WTC11 (cell line): ENCODE measurements at regions of chr11 and their contacts with region 1.

Region 1: DNA sequence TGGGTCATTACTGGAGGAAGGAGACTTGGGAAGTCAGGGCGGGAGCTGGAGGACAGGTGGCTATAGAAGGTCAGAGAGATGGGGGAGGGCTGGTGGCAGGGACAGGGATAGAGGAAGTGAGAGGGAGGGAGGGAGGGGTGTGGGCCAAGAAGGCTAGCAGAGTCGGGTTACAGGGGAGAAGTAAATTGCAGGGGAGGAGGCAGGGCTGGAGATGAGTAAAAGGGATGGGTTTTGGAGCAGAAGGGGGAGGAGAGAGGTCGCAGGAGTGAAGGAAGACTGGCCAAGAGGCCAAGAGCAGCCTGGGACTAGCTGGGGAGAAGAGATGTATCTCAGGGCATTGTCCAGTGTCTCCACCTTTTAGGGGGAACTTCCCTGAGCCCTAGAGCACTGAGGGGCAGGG is 33.0 kb downstream of the LRRC10B start:
- DNase-seq: peak; percentile 54
- ATAC-seq: peak; percentile 85
- H3K4me3 Mint-ChIP-seq: peak overlapping the region; percentile 22; the same call in 1 of the 2 replicates
- H3K27ac Mint-ChIP-seq: peak overlapping the region; percentile 60; the same call in 1 of the 2 replicates
- H3K4me1 Mint-ChIP-seq: peaks cover 47% of the 10 kb centered on the region
- H3K27me3 Mint-ChIP-seq: no peaks in the 10 kb centered on the region; the same call in 1 of the 2 replicates
- CTCF ChIP-seq: no peak

Region 2: DNA sequence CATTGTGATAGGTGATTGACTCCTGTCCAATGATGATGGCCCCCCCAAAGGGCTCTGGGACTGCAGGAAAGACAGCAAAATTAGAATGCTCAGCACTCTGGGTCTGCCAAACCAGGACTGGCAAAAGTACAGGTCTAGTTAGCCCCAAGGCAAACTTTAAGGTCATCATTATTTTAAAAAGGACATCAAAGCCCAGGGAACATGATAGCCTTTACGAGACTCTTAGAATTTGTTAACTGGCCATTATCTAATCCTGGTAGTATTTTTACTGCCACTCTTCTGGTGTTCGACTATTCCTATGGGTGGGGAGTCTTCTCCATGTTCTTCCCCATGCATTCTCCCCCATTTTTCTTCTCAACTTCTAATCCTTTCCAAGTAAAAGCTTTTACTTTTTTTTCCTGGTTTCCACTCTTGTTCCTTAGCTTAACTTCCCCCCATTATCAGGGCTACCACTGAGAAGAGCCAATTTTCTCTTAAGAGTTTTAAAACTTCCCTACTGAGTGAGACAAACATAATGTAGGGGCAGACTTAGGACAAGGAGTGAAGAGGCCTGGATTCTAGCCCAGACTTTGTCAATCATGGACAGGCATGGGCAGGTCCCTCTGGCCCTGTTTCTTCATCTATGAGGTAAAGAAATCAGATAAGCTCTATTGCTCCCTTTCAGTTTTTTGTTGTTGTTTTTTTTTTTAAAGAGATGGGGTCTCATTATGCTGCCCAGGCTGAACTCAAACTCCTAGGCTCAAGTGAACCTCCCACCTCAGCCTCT is 215.8 kb before region 1 on chr11:
- CTCF ChIA-PET with region 1: no interaction called
- POLR2A ChIA-PET with region 1: no interaction called
- DNase-seq: no peak
- ATAC-seq: no peak
- H3K4me3 Mint-ChIP-seq: no peak overlapping the region
- H3K27ac Mint-ChIP-seq: no peak overlapping the region; the same call in 1 of the 2 replicates
- H3K4me1 Mint-ChIP-seq: no peaks in the 10 kb centered on the region; the same call in 1 of the 2 replicates
- H3K27me3 Mint-ChIP-seq: no peaks in the 10 kb centered on the region
- CTCF ChIP-seq: no peak

Region 3: DNA sequence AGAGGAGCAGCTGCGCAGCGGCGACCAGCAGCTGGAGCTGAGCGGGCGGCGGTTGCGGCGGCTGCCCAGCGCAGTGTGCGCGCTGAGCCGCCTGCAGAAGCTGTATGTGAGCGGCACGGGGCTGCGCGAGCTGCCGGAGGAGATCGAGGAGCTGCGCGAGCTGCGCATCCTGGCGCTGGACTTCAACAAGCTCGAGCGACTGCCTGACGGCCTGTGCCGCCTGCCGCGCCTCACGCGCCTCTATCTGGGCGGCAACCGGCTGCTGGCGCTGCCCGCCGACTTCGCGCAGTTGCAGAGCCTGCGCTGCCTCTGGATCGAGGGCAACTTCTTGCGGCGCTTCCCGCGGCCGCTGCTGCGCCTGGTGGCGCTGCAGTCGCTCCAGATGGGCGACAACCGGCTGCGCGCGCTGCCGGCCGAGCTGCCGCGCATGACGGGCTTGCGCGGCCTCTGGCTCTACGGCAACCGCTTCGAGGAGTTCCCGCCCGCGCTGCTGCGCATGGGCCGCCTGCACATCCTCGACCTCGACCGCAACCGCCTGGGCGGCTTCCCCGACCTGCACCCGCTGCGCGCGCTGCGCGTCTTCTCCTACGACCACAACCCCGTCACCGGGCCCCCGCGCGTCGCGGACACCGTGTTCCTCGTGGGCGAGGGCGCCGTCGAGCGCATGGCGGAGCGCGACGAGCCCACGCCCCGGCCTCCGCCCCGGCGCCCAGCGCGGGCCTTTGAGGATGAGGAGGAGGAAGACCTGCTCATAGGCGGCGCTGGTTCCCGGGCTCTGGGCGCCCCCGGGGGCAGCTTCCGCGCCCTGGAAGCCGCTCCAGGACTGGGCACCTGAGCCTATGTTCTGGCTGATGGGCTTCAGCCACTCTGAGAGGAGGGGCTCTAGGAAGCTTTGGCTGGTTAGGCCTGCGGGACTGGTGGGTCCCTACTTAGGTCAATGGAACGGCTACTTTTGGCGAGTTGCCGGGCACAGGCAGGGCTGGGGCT is 32.3 kb before region 1 on chr11:
- CTCF ChIA-PET with region 1: interaction called, 68 read pairs
- POLR2A ChIA-PET with region 1: no interaction called
- DNase-seq: peak; percentile 80
- ATAC-seq: peak; percentile 63
- H3K4me3 Mint-ChIP-seq: peak overlapping the region; percentile 48
- H3K27ac Mint-ChIP-seq: no peak overlapping the region
- H3K4me1 Mint-ChIP-seq: peaks cover 58% of the 10 kb centered on the region
- H3K27me3 Mint-ChIP-seq: peaks cover 59% of the 10 kb centered on the region
- CTCF ChIP-seq: no peak

Region 4: DNA sequence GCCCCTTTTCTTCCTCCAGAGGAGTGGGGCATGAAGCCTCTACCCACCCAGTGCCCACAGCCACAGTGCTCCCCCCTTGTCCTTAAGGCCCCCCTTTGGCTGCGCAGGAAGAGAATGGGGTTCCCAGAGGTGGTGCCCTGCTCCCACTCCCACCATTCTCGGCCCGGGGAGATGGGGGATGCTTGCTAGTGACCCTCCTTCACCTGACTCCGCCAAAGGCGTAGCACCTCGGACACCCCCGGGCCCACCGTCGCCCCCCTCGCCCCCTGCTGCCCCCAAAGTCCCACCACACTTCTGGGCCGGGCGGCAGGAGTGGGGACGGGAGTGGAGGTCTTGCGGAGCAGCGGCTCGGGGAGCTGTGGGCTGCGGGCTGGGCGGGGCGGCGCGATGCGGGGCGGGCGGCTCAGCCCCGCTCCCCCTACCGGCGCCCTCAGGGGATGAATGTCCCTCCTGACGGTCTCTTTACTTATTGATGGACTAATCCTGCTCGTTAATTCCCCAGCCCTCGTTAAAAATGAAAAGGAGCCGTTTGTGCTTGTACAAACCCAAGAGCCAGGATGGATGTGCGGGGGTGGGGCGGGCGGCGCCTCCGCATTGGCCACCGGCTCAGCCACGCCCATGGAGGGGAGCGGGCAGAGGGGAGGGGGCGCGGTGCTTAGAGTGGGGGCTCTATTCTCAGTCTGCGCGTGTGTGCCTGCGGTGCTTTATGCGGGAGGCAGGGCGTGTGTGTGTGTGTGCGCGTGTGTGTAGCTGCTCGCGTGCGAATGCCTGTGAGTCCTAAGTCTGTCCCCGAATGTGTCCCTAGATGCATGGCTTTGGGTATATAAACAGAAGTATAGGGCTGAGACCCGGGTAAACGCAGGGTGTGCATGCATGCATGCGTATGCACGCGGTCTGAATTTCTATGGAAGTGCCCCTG is 13.7 kb after region 1 on chr11:
- CTCF ChIA-PET with region 1: interaction called, 13 read pairs
- POLR2A ChIA-PET with region 1: interaction called, 3 read pairs
- DNase-seq: peak; percentile 66
- ATAC-seq: peak; percentile 64
- H3K4me3 Mint-ChIP-seq: peak overlapping the region; percentile 70
- H3K27ac Mint-ChIP-seq: no peak overlapping the region
- H3K4me1 Mint-ChIP-seq: peaks cover 39% of the 10 kb centered on the region
- H3K27me3 Mint-ChIP-seq: peaks cover 30% of the 10 kb centered on the region
- CTCF ChIP-seq: peak; percentile 49; the same call in 1 of the 2 replicates